Activated T-helper 1 cell treated with anti-CD3 and anti-CD28 coated beads, Interleukin-12 subunit alpha, Interleukin-12 subunit beta, Interleukin-2, Interleukin-4 antibody, amounts not matched to agents 30 ng/mL and 10 ng/mL and 1 ng/mL, durations not matched to agents 14 hours and 24 hours and 36 hours (primary cell): ENCODE measurements at regions of chr7 and their contacts with region 1.

Region 1: GRCh38 chr7:139777948-139778841 is at the start of gene HIPK2:
- DNase-seq: peak; percentile 65
- H3K4me3 Mint-ChIP-seq: peak within 1 kb of the TSS; percentile 99
- H3K27ac Mint-ChIP-seq: peak within 1 kb of the TSS; percentile 98
- H3K4me1 Mint-ChIP-seq: peaks cover 48% of the 10 kb centered on the region
- H3K27me3 Mint-ChIP-seq: peaks cover 15% of the 10 kb centered on the region
- total RNA-seq, gene HIPK2: 28.3 and 29.2 TPM in 2 replicates

Region 2: GRCh38 chr7:139359366-139360209 is 418.6 kb before region 1 on chr7 and contains the start of gene LUC7L2:
- intact Hi-C with region 1: loop called (anchors 10 kb)
- DNase-seq: peak; percentile 99
- H3K4me3 Mint-ChIP-seq: peak within 1 kb of the TSS; percentile 88
- H3K27ac Mint-ChIP-seq: peak within 1 kb of the TSS; percentile 97
- H3K4me1 Mint-ChIP-seq: peaks cover 29% of the 10 kb centered on the region
- H3K27me3 Mint-ChIP-seq: no peaks in the 10 kb centered on the region
- total RNA-seq, gene LUC7L2: 179 and 194 TPM in 2 replicates

Region 3: GRCh38 chr7:139673230-139673629 is 105.0 kb before region 1 on chr7:
- intact Hi-C with region 1: loop called (anchors 2 kb)
- DNase-seq: peak; percentile 20
- H3K4me3 Mint-ChIP-seq: no peak overlapping the region
- H3K27ac Mint-ChIP-seq: peak overlapping the region; percentile 19
- H3K4me1 Mint-ChIP-seq: peaks cover 51% of the 10 kb centered on the region
- H3K27me3 Mint-ChIP-seq: peaks cover 3% of the 10 kb centered on the region

Region 4: DNA sequence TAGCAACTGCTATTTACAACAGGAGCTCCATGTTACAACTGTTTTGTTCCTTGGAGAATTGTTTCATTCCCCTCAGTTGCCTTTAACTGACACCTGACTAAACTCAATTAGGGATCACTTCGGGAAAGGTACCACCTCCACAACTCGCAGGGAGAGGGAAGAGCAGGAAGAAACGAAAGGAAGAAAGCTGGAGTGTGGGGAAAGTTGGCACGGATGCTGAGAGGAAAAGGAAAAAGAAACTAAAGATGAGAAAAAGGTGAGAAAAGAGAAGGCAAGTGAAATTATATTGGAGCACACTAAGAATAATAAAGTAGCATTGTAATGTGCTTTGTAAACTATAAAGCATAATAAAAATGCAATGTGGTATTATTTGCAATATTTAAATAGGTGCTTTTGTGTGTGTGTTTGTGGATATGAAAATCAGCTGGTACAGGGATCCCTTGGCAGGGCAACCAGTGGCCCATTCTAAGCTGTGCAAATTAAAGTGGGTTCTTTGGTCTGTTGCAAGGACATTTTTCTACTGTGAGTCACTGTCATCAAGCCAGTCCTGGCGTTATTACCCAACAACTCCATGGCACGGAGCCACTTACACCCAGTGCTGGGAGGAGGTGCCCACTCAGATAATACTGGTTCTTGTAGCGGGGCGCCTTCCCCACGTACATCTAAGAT is 46.3 kb before region 1 on chr7:
- intact Hi-C with region 1: loop called (anchors 1 kb)
- DNase-seq: no peak
- H3K4me3 Mint-ChIP-seq: peak overlapping the region; percentile 24
- H3K27ac Mint-ChIP-seq: peak overlapping the region; percentile 9
- H3K4me1 Mint-ChIP-seq: peaks cover 64% of the 10 kb centered on the region
- H3K27me3 Mint-ChIP-seq: peaks cover 1% of the 10 kb centered on the region

Region 5: DNA sequence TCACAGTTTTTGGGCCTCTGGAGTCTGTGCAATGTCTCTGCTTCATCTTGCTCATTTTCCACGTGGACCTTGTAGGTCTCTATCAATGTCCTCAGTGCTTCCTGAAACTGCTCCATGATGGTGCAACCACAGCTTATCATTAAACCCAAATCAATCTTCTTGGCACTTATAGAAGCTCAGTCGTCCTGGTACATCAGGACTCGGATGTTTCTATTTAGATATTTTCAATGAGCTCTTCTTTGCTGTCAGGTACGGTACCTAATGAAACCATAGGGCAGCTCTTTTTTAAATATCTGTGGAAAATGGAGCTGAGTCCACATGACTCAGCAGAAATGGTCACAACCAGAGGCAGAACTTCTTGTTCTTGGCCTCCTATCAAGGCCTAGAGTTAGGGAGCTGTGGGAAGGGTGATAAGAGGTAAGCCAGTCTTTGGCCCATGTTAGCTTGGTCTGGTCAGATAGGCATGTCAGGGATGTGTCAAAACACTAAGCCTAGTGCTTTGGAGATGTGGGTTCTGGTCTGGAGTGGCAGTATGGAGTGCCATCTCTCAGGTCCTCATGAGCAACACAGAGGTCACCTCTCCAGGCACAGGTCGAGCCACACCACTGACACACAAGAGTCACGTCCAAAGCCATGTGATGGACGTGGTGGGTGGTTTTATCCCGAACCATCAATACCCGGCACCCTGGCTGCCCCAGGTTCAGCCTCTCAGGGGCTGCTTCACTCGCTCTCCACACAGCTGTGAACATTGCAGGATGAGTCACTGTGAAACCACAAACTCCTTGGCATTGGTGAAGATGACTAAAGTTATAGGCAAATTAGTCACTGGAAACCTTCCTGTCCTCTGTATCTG is 137.9 kb after region 1 on chr7:
- intact Hi-C with region 1: loop called (anchors 1 kb)
- DNase-seq: peak; percentile 65
- H3K4me3 Mint-ChIP-seq: no peak overlapping the region
- H3K27ac Mint-ChIP-seq: peak overlapping the region; percentile 74
- H3K4me1 Mint-ChIP-seq: peaks cover 29% of the 10 kb centered on the region
- H3K27me3 Mint-ChIP-seq: peaks cover 2% of the 10 kb centered on the region

Region 6: DNA sequence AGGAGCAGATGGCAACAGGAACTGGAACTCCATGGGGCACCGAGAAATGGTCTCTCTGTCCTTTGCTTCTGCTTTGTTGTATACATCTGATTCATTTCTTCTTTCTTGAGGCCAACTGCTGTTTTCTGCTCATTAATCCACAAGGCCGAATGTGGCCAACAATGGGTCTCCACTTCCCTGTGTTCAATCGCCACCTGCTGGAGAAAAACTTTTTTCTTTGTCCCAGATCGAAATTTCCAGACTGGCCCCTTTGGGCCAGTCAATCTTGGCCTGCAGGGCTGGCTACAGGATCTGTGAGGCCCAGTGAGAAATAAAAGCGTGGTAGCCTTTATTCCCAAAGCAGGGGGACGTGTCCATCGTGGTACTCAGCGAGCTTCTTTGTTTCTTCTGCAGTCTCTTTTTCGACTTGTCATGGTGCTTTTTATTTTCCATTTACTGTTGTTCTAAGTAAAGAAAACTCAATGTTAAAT is 225.8 kb after region 1 on chr7:
- intact Hi-C with region 1: loop called (anchors 1 kb)
- DNase-seq: peak; percentile 6
- H3K4me3 Mint-ChIP-seq: no peak overlapping the region
- H3K27ac Mint-ChIP-seq: no peak overlapping the region
- H3K4me1 Mint-ChIP-seq: no peaks in the 10 kb centered on the region
- H3K27me3 Mint-ChIP-seq: peaks cover 2% of the 10 kb centered on the region

Region 7: GRCh38 chr7:140304191-140304799 is 526.1 kb after region 1 on chr7:
- intact Hi-C with region 1: loop called (anchors 5 kb)
- DNase-seq: peak; percentile 27
- H3K4me3 Mint-ChIP-seq: no peak overlapping the region
- H3K27ac Mint-ChIP-seq: peak overlapping the region; percentile 78
- H3K4me1 Mint-ChIP-seq: peaks cover 21% of the 10 kb centered on the region
- H3K27me3 Mint-ChIP-seq: no peaks in the 10 kb centered on the region